Activated naive CD4-positive, alpha-beta T cell treated with anti-CD3 and anti-CD28 coated beads for 36 hours (primary cell): ENCODE measurements at regions of chr3 and their contacts with region 1.

Region 1: GRCh38 chr3:143674100-143674968 is 173.9 kb downstream of the SLC9A9 start:
- DNase-seq: peak; percentile 89
- H3K4me3 Mint-ChIP-seq: peak overlapping the region; percentile 46
- H3K27ac Mint-ChIP-seq: no peak overlapping the region
- H3K4me1 Mint-ChIP-seq: peaks cover 10% of the 10 kb centered on the region
- H3K27me3 Mint-ChIP-seq: no peaks in the 10 kb centered on the region

Region 2: GRCh38 chr3:143216709-143217182 is 457.6 kb before region 1 on chr3:
- CTCF ChIA-PET with region 1: no interaction called
- intact Hi-C with region 1: loop called (anchors 5 kb)
- DNase-seq: no peak
- H3K4me3 Mint-ChIP-seq: peak overlapping the region; percentile 43
- H3K27ac Mint-ChIP-seq: peak overlapping the region; percentile 25
- H3K4me1 Mint-ChIP-seq: peaks cover 20% of the 10 kb centered on the region
- H3K27me3 Mint-ChIP-seq: no peaks in the 10 kb centered on the region

Region 3: GRCh38 chr3:143433787-143434378 is 240.5 kb before region 1 on chr3:
- CTCF ChIA-PET with region 1: interaction called, 10 read pairs
- intact Hi-C with region 1: loop called (anchors 1 kb)
- DNase-seq: peak; percentile 64
- H3K4me3 Mint-ChIP-seq: no peak overlapping the region
- H3K27ac Mint-ChIP-seq: no peak overlapping the region
- H3K4me1 Mint-ChIP-seq: no peaks in the 10 kb centered on the region
- H3K27me3 Mint-ChIP-seq: no peaks in the 10 kb centered on the region

Region 4: DNA sequence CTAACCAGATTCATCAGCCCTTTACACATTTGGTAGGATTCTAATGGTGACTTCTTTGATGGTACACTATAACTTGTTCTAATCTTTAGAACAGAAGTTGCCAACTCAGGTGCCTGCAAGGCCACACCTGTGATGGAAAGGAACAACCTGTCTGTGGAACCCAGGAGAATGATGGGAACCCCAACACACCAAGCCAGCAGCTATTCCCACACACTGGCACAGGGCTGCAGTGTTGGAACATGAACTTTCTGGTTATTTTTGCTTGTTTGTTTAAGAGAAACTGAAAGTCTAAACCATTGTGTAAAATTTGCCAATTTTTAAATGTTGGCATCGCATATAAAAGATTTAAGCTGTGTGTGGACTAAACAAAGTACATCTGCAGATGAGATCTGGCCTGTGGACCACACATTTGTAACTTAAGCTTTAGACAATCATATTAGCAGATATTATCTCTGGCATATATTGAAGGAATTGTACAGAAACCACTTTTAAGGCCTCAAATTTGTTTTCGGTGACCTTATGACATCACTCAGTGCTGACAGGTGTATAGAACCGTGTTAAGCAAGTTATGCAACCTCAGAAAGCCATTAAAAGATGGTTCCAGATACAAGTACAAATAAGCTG is 69.0 kb before region 1 on chr3:
- CTCF ChIA-PET with region 1: no interaction called
- intact Hi-C with region 1: no loop called
- DNase-seq: no peak
- H3K4me3 Mint-ChIP-seq: no peak overlapping the region
- H3K27ac Mint-ChIP-seq: no peak overlapping the region
- H3K4me1 Mint-ChIP-seq: no peaks in the 10 kb centered on the region
- H3K27me3 Mint-ChIP-seq: no peaks in the 10 kb centered on the region

Region 5: GRCh38 chr3:143644370-143645089 is 29.8 kb before region 1 on chr3:
- CTCF ChIA-PET with region 1: interaction called, 3 read pairs
- intact Hi-C with region 1: loop called (anchors 2 kb)
- DNase-seq: peak; percentile 48
- H3K4me3 Mint-ChIP-seq: no peak overlapping the region
- H3K27ac Mint-ChIP-seq: no peak overlapping the region
- H3K4me1 Mint-ChIP-seq: no peaks in the 10 kb centered on the region
- H3K27me3 Mint-ChIP-seq: no peaks in the 10 kb centered on the region

Region 6: GRCh38 chr3:144085979-144086378 is 411.6 kb after region 1 on chr3:
- CTCF ChIA-PET with region 1: no interaction called
- intact Hi-C with region 1: no loop called
- DNase-seq: no peak
- H3K4me3 Mint-ChIP-seq: no peak overlapping the region
- H3K27ac Mint-ChIP-seq: no peak overlapping the region
- H3K4me1 Mint-ChIP-seq: no peaks in the 10 kb centered on the region
- H3K27me3 Mint-ChIP-seq: peaks cover 11% of the 10 kb centered on the region